Naive thymus-derived CD4-positive, alpha-beta T cell (primary cell): ENCODE measurements at regions of chr3 and their contacts with region 1.

Region 1: DNA sequence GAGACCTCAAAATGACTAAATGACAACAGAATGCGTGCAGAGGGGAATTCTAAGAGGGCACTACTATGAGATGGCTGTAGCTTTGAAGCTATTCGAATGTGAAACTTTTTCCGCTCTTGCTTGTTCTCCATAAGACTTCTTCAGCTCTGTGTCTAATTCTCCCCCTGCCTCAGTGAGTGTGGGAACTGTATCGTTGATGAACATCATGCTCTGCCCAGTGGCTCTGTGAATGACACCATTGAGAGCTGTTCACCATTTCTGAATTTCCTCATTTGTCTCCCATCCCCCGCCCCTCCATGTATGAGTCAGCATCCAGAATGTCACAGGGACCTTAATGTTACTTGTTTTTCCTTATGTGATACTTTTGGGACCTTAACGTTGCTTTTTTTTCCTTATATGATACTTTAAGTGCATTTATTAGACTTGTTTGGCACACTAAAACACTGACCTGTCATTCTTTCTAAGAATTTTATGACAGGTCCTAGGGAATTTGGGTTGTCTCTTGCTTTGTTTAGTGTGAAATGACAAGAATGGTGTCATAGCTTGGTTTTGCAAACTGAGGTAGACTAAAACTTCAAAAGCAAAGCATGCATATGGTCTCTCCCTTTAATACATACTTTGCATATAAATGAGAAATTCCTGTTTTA is 99.5 kb downstream of the FNDC3B start:
- DNase-seq: no peak
- ATAC-seq: peak; percentile 64
- H3K4me3 ChIP-seq: no peak overlapping the region
- H3K4me3 Mint-ChIP-seq: peak overlapping the region in 3 of 10 donors; percentile 2 to 66 (median 3)
- H3K27ac ChIP-seq: no peak overlapping the region
- H3K27ac Mint-ChIP-seq: peak overlapping the region in 2 of 9 donors; percentile 7 to 92
- H3K4me1 ChIP-seq: peaks cover 8 to 24% of the 10 kb centered on the region in 2 donors
- H3K4me1 Mint-ChIP-seq: peaks cover 9 to 70% (median 58%) of the 10 kb centered on the region in 7 donors
- H3K27me3 ChIP-seq: no peaks in the 10 kb centered on the region
- H3K27me3 Mint-ChIP-seq: no peaks in the 10 kb centered on the region

Region 2: GRCh38 chr3:172153335-172153861 is 14.5 kb after region 1 on chr3:
- CTCF ChIA-PET with region 1: no interaction called
- POLR2A ChIA-PET with region 1: no interaction called
- intact Hi-C with region 1: loop called in 1 of 2 experiments (anchors 2 kb)
- DNase-seq: peak in 6 of 9 donors; percentile 7 to 52 (median 15)
- ATAC-seq: peak; percentile 95
- H3K4me3 ChIP-seq: no peak overlapping the region
- H3K4me3 Mint-ChIP-seq: peak overlapping the region; percentile 14 to 64 (median 45)
- H3K27ac ChIP-seq: no peak overlapping the region
- H3K27ac Mint-ChIP-seq: peak overlapping the region in 6 of 9 donors; percentile 12 to 83 (median 28)
- H3K4me1 ChIP-seq: peaks cover 0 to 6% of the 10 kb centered on the region in 2 donors
- H3K4me1 Mint-ChIP-seq: peaks cover 23 to 60% (median 36%) of the 10 kb centered on the region in 7 donors
- H3K27me3 ChIP-seq: no peaks in the 10 kb centered on the region
- H3K27me3 Mint-ChIP-seq: no peaks in the 10 kb centered on the region